Prostate gland (tissue), 2 donors: ENCODE measurements at regions of chr11 and their contacts with region 1.

Region 1: DNA sequence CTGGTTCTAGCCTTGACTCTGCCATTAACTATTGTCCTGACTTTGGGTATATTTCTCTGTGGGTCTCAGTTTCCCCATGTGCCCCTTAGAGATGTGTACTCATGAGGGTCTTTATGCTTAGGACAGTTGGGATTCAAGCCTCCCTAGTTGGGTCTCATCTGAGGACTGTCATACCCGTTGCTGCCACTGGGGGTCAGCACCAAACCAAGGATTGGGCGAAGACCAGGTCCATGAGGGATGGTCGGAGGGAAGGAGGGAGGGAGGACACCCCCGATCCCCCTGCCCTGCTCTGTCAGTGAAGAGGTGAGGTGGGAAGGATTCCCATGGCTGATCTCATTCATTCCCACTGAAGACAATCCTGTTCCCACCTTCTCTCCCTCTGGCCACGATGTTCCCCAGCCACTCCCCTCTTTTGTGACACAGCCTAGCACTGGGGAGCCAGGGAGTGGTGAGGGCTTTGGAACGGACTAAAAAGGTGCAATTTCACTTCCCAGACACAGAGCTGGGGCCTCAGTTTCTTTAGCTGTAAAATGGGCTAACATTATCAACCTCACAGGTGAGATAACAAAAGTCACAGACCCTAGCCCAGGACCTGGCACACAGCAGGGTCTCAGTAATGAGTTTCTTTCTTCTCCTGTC is 12.4 kb upstream of the KLHL35 start:
- DNase-seq: peak; percentile 64
- H3K4me3 ChIP-seq: no peak overlapping the region
- H3K27ac ChIP-seq: no peak overlapping the region
- H3K4me1 ChIP-seq: no peaks in the 10 kb centered on the region
- H3K27me3 ChIP-seq: no peaks in the 10 kb centered on the region
- CTCF ChIP-seq: peak; percentile 95 to 98 (median 96)
- POLR2A ChIP-seq: no peak

Region 2: GRCh38 chr11:75408852-75409219 is 36.6 kb before region 1 on chr11:
- intact Hi-C with region 1: loop called (anchors 2 kb)
- DNase-seq: no peak
- H3K4me3 ChIP-seq: no peak overlapping the region
- H3K27ac ChIP-seq: no peak overlapping the region
- H3K4me1 ChIP-seq: no peaks in the 10 kb centered on the region
- H3K27me3 ChIP-seq: no peaks in the 10 kb centered on the region
- CTCF ChIP-seq: no peak
- POLR2A ChIP-seq: no peak

Region 3: DNA sequence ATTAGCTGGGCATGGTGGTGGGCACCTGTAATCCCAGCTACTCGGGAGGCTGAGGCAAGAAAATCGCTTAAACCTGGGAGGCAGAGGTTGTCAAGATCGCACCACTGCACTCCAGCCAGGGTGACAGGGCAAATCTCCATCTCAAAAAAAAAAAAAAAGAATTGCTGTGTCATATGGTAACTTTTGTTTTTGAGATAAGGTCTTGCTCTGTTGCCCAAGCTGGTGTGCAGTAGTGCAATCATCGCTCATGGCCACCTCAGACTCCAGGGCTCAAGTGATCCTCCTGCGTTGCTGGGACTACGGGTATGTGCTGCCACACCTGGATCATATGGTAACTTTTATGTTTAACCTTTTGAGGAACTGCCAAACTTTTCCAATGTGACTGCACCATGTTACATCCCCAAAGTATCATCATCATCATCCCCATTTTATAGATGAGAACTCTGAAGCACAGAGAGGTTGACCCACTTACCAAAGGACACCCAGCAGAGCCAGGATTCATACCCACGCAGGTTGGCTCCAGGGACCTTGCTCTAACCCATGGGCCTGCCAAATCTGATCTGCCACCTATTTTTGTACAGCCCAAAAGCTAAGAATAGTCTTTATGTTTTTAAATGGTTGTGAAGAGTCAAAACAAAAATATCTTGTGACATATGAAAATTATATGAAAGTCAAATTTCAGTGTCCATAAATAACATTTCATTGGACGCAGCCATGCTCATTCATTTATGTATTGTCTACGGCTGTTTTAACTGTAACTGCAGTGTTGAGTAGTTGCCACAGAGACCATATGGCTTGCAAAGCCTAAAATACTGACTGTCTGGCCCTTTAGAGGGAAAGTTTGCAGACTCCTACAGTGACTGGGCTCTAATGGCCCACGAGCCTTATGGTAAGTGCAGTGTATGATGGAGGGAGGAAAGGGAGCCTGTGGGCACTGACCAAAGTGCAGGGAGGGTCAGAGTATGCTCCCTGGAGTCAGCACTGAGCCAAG is 35.0 kb after region 1 on chr11:
- intact Hi-C with region 1: no loop called
- DNase-seq: no peak
- H3K4me3 ChIP-seq: no peak overlapping the region
- H3K27ac ChIP-seq: no peak overlapping the region
- H3K4me1 ChIP-seq: peaks cover 9% of the 10 kb centered on the region
- H3K27me3 ChIP-seq: no peaks in the 10 kb centered on the region
- CTCF ChIP-seq: no peak
- POLR2A ChIP-seq: no peak

Region 4: DNA sequence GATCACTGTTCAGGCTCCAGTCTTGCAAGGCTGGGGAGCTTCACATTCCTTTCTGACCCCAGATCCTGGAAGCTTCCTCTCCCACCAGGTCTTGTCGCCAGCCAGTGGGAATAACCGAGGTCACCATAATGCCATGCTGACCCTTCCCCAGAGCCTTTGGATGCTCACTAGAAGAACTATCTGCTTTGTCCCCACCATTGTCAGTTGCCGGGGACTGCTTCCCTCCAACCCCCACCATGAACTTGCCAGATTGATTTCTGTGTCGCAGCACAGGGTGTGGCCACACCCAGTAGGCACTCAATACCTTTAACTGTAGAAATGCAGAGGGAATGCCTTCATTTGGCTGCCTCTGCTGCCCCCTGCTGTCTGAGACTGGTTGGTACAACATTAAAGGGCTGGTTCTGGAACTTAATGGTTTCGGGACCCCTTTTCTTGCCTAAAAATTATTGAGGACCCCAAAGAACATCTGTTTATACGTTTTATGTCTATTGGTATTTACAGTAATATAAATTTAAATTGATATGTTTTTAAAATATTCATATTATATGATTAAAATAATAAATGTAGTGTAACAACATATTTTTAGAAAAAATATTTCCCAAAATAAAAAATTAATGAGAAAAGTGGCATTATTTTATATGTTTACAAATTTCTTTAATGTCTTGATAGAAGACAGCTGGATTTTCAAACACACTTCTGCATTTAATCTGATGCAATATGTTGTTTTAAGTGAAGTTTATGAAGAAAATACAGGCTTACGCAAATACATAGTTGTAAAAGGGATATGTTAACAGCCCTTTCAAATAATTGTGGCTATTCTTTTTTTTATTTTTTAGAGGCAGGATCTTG is 87.0 kb after region 1 on chr11:
- intact Hi-C with region 1: loop called (anchors 1 kb)
- DNase-seq: peak; percentile 45
- H3K4me3 ChIP-seq: no peak overlapping the region
- H3K27ac ChIP-seq: no peak overlapping the region
- H3K4me1 ChIP-seq: no peaks in the 10 kb centered on the region
- H3K27me3 ChIP-seq: no peaks in the 10 kb centered on the region
- CTCF ChIP-seq: peak; percentile 87 to 93 (median 91)
- POLR2A ChIP-seq: no peak